GM12878 (cell line): ENCODE measurements at regions of chr11 and their contacts with region 1.

Region 1: DNA sequence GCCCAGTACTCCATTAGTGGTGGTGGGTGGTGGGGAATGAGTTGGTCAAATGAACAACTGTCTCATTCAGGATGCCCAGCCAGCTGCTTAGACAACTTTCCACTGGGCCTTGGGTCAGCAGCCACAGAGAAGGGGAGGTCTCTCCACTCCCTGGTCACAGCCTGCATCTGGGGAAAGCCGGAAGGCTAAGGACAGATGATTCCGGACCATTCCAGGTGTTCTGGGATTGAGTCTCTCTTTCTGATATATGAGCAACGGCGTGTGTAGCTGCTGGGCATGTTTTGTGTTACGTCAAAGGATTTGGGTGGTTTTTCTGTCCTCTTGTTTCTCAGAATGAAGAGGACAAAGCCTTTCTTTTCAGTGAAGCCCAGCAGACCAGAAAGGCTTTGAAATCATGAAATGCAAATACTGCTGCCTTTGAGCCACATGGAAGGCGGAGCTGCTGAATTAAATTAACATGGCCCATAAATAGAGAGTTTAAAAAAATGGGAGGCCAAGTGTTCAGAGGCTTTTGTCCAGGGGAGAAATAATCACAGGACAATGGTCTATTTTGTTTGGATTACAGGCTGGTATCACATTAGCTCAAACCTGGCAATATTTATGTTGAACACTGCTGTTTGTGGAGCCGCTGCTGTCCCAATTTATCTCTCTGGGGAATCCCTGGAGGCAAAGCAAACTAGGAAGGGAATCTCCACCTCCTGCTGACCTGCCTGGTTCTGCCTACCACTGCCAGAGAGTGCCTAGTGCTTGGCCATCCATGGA is 234.4 kb upstream of the E2F8 start:
- DNase-seq: peak; percentile 76
- ATAC-seq: peak; percentile 95
- H3K4me3 ChIP-seq: no peak overlapping the region; the same call in 1 of the 2 replicates
- H3K27ac ChIP-seq: peak overlapping the region; percentile 56
- H3K4me1 ChIP-seq: peaks cover 23% of the 10 kb centered on the region
- H3K27me3 ChIP-seq: no peaks in the 10 kb centered on the region
- CTCF ChIP-seq: 0 out of 6 replicates have a peak, but pooled peaks of 1 of the 3 experiments have one; percentile 2
- EP300 ChIP-seq: peak in 1 of 2 experiments; percentile 75; a peak in 2 of 4 replicates
- POLR2A ChIP-seq: no peak
- RAD21 ChIP-seq: no peak

Region 2: GRCh38 chr11:19441752-19442553 is 33.2 kb before region 1 on chr11:
- CTCF ChIA-PET with region 1: interaction called, 3 read pairs
- POLR2A ChIA-PET with region 1: interaction called, 3 read pairs
- RAD21 ChIA-PET with region 1: interaction called, 12 read pairs
- SMC1A ChIA-PET with region 1: interaction called, 11 read pairs
- in situ Hi-C with region 1: no loop called
- intact Hi-C with region 1: loop called (anchors 2 kb)
- DNase-seq: peak; percentile 95
- ATAC-seq: peak; percentile 95
- H3K4me3 ChIP-seq: no peak overlapping the region
- H3K27ac ChIP-seq: peak overlapping the region; percentile 88
- H3K4me1 ChIP-seq: peaks cover 27% of the 10 kb centered on the region
- H3K27me3 ChIP-seq: no peaks in the 10 kb centered on the region
- CTCF ChIP-seq: no peak
- EP300 ChIP-seq: peak; percentile 92 to 99
- POLR2A ChIP-seq: no peak
- RAD21 ChIP-seq: peak; percentile 22; the same call in 1 of the 2 replicates

Region 3: GRCh38 chr11:19460718-19461405 is 14.3 kb before region 1 on chr11:
- CTCF ChIA-PET with region 1: interaction called, 4 read pairs
- POLR2A ChIA-PET with region 1: interaction called, 3 read pairs
- RAD21 ChIA-PET with region 1: interaction called, 4 read pairs
- SMC1A ChIA-PET with region 1: interaction called, 39 read pairs
- in situ Hi-C with region 1: no loop called
- intact Hi-C with region 1: no loop called
- DNase-seq: no peak
- ATAC-seq: no peak
- H3K4me3 ChIP-seq: no peak overlapping the region
- H3K27ac ChIP-seq: no peak overlapping the region
- H3K4me1 ChIP-seq: no peaks in the 10 kb centered on the region
- H3K27me3 ChIP-seq: no peaks in the 10 kb centered on the region
- CTCF ChIP-seq: no peak
- EP300 ChIP-seq: no peak
- POLR2A ChIP-seq: no peak
- RAD21 ChIP-seq: no peak